Activated naive CD4-positive, alpha-beta T cell treated with anti-CD3 and anti-CD28 coated beads for 36 hours (primary cell): ENCODE measurements at regions of chr15 and their contacts with region 1.

Region 1: GRCh38 chr15:58227706-58228543 is 89.7 kb downstream of the AQP9 start:
- DNase-seq: peak; percentile 85
- H3K4me3 Mint-ChIP-seq: no peak overlapping the region
- H3K27ac Mint-ChIP-seq: no peak overlapping the region
- H3K4me1 Mint-ChIP-seq: peaks cover 14% of the 10 kb centered on the region
- H3K27me3 Mint-ChIP-seq: peaks cover 2% of the 10 kb centered on the region

Region 2: DNA sequence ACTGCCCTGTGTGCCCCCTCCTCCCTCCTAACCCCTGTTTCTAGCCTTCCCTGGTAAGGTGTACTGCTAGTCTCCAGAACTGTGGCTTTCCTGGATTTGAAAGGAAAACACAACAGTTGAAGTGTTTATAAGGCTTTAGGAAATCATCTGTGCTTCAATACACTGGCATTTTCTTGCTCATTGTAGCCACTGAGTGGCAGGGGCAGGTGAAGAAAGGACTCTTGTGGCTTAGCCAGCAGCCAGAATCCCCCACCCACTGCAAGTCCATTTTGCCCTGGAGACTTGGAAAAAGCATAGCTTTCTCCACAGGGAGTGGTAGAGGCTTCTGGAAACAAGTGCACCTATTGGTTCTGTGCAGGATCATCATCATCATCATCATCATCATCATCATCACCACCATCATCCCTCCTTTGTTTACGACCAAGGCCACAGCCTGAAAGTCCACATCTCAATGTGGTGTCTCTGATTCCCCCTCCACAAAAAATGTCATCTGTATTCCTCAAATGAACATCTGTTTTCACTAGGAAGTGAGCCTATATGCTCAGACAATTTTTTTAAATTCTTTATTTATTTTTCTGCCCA is 56.4 kb before region 1 on chr15:
- CTCF ChIA-PET with region 1: no interaction called
- intact Hi-C with region 1: no loop called
- DNase-seq: no peak
- H3K4me3 Mint-ChIP-seq: no peak overlapping the region
- H3K27ac Mint-ChIP-seq: no peak overlapping the region
- H3K4me1 Mint-ChIP-seq: no peaks in the 10 kb centered on the region
- H3K27me3 Mint-ChIP-seq: peaks cover 28% of the 10 kb centered on the region

Region 3: DNA sequence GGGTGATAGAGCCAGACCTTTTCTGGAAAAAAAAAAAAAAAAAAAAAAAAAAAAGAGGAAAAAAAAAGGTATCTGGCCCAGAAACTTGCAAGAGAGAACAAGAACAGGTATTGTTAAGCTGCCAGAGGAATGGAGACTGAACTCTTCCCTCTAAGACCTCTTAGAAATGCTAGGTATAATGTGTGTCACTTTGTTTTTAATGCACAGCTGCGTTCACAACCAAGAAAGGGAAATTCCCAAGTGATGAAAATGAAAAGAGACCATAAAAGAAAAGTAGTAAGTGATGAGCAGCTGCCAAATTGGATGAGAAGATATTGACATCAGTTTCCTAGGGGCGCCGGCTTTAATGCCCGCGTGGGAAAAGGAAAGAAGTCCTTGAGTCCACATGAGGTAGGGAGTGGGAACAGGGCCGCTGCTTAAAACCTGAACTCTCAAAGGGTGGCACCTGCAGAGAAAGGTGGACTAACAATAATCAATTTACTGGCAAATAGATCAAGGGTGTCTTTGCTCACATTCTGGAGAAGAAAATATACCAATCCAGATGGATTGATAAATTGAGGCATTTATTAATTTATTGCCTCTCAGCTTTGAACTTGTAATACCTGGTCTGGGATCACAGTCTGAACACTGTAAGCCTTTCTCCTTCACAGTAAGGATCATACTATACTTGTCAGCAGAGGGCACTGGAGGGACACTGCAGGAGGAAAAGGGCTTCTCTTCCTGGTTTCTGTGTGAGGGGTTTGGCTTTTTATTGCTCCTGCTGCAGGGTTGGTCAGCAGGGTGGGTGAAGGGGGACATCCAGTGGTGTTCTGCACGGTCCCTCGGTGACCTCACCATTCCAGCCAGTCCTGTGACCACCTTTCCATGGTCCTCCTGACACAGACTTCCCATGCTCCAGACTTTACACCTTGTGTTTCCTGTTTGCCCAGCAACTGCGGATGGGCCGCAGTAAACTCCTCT is 41.8 kb after region 1 on chr15:
- CTCF ChIA-PET with region 1: interaction called, 6 read pairs
- intact Hi-C with region 1: loop called (anchors 2 kb)
- DNase-seq: peak; percentile 56
- H3K4me3 Mint-ChIP-seq: no peak overlapping the region
- H3K27ac Mint-ChIP-seq: no peak overlapping the region
- H3K4me1 Mint-ChIP-seq: peaks cover 11% of the 10 kb centered on the region
- H3K27me3 Mint-ChIP-seq: no peaks in the 10 kb centered on the region

Region 4: DNA sequence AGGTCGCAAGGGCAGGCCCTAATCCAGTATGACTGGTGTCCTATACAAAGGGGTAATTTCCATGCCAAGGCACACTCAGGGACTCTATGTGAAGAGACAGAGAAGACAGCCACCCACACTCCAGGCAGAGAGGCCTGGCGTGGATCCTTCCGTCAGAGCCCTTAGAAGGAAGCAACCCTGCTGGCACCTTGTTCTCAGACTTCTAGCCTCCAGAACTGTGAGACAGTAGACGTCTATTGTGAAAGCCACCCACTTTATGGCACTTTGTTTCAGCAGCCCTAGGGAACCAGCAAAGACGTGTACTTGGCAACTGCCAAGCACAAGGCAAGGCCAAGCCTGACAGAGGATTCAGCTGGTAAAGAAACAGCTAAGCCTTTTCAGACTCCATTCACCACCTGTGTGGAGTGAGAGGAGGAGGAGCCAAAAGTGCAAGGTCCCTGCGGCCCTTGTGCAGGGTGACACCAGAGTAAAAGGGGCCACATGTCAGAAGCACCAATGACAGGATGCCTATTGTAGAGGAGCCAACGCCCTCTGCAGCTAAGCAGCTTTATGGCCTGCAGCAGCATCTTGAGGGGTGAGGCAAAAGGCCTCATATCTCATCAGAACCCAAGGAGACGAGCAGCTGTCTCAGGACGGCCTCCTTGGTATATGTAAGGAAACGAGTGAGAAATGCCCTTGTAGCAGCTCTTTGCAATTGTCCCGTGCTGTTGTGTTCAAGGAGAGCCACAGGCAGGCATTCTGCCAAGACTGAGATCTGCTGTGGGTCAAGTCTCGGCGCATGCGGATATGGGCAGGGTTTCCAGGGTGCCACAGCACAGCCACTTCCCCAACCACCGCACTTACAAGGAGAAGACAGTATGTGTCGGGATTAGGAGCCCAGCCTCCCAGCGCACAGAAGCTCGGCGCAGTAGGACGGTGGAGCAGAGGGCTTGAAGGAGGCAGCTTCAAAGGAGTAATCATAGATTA is 82.3 kb after region 1 on chr15:
- CTCF ChIA-PET with region 1: interaction called, 3 read pairs
- intact Hi-C with region 1: loop called (anchors 5 kb)
- DNase-seq: no peak
- H3K4me3 Mint-ChIP-seq: no peak overlapping the region
- H3K27ac Mint-ChIP-seq: no peak overlapping the region
- H3K4me1 Mint-ChIP-seq: peaks cover 26% of the 10 kb centered on the region
- H3K27me3 Mint-ChIP-seq: no peaks in the 10 kb centered on the region

Region 5: DNA sequence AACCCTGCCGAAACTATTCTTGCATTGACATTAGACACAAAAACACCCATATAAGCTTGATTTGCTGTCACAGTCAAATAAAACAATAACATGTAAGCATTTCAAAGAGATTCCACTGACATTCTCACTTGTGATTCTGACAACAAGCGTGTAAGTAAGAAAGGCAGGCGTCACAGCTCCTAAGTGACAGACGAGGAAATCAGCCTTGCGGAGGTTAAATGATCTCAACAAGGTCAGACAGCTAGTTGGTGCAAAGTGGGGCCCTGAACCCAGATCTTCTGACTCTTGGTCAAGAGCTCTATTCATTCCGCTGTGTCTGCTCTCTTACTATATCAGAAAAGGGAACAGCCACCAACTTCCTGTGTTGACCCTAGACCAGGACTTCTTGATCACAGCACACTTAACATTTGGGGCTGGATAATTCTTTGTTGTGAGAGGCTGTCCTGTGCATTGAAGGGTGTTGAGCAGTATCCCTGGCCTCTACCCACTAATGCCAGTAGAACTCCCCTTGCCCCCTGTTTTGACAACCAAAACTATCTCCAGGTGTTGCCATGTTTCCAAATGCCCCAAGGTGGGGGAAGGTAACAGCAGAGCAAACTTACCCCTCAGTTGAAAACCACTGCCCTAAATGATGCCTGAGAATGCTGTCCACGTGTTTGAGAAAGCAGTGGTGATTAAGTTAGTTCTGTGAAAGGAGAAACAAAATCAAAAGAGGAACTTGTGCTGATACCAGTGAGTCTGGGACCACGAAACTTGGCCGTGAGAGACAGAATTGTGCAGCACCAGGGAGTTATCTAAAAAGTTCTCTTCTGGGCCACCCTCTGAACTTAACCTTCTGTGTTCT is 290.0 kb after region 1 on chr15:
- CTCF ChIA-PET with region 1: no interaction called
- intact Hi-C with region 1: loop called (anchors 5 kb)
- DNase-seq: peak; percentile 38
- H3K4me3 Mint-ChIP-seq: no peak overlapping the region
- H3K27ac Mint-ChIP-seq: peak overlapping the region; percentile 43
- H3K4me1 Mint-ChIP-seq: peaks cover 62% of the 10 kb centered on the region
- H3K27me3 Mint-ChIP-seq: no peaks in the 10 kb centered on the region

Region 6: DNA sequence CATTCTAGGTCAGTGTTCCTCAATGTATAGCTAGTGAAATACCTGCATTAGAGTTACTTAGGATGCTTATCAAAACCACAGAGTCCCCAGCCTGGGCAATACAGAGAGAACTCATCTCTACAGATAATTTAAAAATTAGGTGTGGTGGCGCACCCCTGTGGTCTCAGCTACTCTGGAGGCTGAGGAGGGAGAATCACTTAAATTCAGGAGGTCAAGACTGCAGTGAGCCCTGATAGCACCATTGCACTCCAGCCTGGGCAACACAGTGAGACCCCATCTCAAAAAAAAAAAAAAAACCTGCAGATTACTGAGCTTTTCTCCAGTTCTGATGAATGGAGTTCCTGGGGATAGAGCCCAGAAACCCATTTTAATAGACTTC is 533.1 kb after region 1 on chr15:
- CTCF ChIA-PET with region 1: interaction called, 4 read pairs
- intact Hi-C with region 1: loop called (anchors 1 kb)
- DNase-seq: peak; percentile 62
- H3K4me3 Mint-ChIP-seq: no peak overlapping the region
- H3K27ac Mint-ChIP-seq: no peak overlapping the region
- H3K4me1 Mint-ChIP-seq: no peaks in the 10 kb centered on the region
- H3K27me3 Mint-ChIP-seq: no peaks in the 10 kb centered on the region

Region 7: GRCh38 chr15:58957101-58957973 is 729.4 kb after region 1 on chr15:
- CTCF ChIA-PET with region 1: no interaction called
- intact Hi-C with region 1: loop called (anchors 5 kb)
- DNase-seq: peak; percentile 75
- H3K4me3 Mint-ChIP-seq: no peak overlapping the region
- H3K27ac Mint-ChIP-seq: no peak overlapping the region
- H3K4me1 Mint-ChIP-seq: peaks cover 10% of the 10 kb centered on the region
- H3K27me3 Mint-ChIP-seq: no peaks in the 10 kb centered on the region